ENCODE measurements at regions of chr12 and their contacts with region 1.

Region 1: GRCh38 chr12:63843721-63844390 is 644 bp upstream of the SRGAP1 start:
- DNase-seq: peak; percentile 96
- ATAC-seq: peak; percentile 81
- H3K4me3 ChIP-seq: peak overlapping the region; percentile 89
- H3K27ac ChIP-seq: peak overlapping the region; percentile 61
- H3K4me1 ChIP-seq: peaks cover 14% of the 10 kb centered on the region
- H3K27me3 ChIP-seq: no peaks in the 10 kb centered on the region
- CTCF ChIP-seq: peak; percentile 85

Region 2: GRCh38 chr12:63862214-63863107 is 18.6 kb after region 1 on chr12:
- CTCF ChIA-PET with region 1: interaction called, 3 read pairs
- POLR2A ChIA-PET with region 1: interaction called, 3 read pairs
- intact Hi-C with region 1: loop called (anchors 2 kb)
- DNase-seq: peak; percentile 96
- ATAC-seq: peak; percentile 87
- H3K4me3 ChIP-seq: peak overlapping the region; percentile 53
- H3K27ac ChIP-seq: peak overlapping the region; percentile 89
- H3K4me1 ChIP-seq: peaks cover 52% of the 10 kb centered on the region
- H3K27me3 ChIP-seq: no peaks in the 10 kb centered on the region
- CTCF ChIP-seq: no peak

Region 3: GRCh38 chr12:63978519-63978918 is 134.7 kb after region 1 on chr12:
- CTCF ChIA-PET with region 1: no interaction called
- POLR2A ChIA-PET with region 1: no interaction called
- intact Hi-C with region 1: loop called (anchors 5 kb)
- DNase-seq: peak; percentile 96
- ATAC-seq: peak; percentile 79
- H3K4me3 ChIP-seq: no peak overlapping the region
- H3K27ac ChIP-seq: peak overlapping the region; percentile 63
- H3K4me1 ChIP-seq: peaks cover 54% of the 10 kb centered on the region
- H3K27me3 ChIP-seq: no peaks in the 10 kb centered on the region
- CTCF ChIP-seq: no peak

Region 4: DNA sequence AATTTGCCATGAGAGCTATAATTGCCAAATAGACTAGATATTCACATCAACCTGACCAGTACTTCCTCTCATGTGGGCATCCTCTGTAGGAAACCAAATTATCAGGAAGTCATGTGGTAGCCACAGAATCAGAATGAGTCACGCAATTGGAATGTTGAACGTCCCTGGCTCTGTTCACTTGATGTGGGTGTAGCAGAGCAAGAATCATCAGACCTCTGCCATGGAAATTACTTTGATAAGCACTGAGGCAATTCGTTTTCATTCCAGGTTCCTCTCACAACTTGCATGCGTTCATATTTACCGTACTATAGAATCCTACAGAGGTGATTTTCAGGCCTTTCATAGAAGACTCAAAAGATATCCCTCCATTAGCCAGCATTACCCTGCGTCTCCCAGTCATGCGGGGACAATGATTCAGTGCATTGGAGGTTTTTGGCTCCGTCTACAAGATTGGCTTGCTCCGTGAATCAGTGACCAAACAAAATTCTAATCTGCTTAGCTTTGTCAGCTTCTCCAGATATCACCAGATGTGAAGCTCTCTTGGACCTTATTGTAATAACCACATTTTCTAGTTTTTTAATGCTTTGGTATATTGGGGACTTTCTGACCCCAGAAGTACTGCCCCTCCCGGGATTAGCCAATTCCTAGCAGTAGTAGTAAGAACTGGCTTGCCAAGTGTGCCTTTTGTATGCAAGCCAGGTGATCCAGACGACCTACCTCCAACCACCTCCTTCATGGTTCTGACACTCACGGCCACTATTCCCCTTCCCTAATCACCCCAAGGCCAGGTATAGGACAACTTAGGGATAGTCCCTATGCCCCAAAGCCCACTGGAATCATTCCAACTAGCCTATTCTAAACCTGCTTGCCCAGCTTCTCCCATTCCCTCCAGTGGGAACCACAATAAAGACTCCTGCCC is 244.8 kb after region 1 on chr12:
- CTCF ChIA-PET with region 1: interaction called, 3 read pairs
- POLR2A ChIA-PET with region 1: interaction called, 4 read pairs
- intact Hi-C with region 1: loop called (anchors 5 kb)
- DNase-seq: peak; percentile 98
- ATAC-seq: peak; percentile 96
- H3K4me3 ChIP-seq: peak overlapping the region; percentile 39
- H3K27ac ChIP-seq: peak overlapping the region; percentile 78
- H3K4me1 ChIP-seq: peaks cover 42% of the 10 kb centered on the region
- H3K27me3 ChIP-seq: no peaks in the 10 kb centered on the region
- CTCF ChIP-seq: no peak

Region 5: DNA sequence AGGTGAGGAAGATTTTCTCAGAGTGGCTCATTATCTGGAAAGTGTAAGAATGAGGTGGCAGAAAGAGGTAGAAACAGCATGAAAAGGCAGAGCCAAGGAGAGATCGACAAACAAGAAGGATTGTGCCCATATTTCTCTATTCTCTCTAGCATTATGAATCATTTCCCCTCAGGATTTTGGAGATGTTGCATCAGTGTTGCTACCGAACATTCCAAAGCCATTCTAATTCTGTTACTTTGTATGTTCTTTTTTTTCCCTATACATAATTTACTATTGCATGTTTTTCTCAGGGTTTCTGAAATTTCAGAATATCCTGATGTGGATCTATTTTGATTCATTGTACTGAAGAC is 316.8 kb after region 1 on chr12:
- CTCF ChIA-PET with region 1: no interaction called
- POLR2A ChIA-PET with region 1: no interaction called
- intact Hi-C with region 1: loop called (anchors 1 kb)
- DNase-seq: peak; percentile 73
- ATAC-seq: peak; percentile 86
- H3K4me3 ChIP-seq: peak overlapping the region; percentile 40; the same call in 1 of the 2 replicates
- H3K27ac ChIP-seq: peak overlapping the region; percentile 79
- H3K4me1 ChIP-seq: peaks cover 21% of the 10 kb centered on the region
- H3K27me3 ChIP-seq: no peaks in the 10 kb centered on the region
- CTCF ChIP-seq: no peak

Region 6: DNA sequence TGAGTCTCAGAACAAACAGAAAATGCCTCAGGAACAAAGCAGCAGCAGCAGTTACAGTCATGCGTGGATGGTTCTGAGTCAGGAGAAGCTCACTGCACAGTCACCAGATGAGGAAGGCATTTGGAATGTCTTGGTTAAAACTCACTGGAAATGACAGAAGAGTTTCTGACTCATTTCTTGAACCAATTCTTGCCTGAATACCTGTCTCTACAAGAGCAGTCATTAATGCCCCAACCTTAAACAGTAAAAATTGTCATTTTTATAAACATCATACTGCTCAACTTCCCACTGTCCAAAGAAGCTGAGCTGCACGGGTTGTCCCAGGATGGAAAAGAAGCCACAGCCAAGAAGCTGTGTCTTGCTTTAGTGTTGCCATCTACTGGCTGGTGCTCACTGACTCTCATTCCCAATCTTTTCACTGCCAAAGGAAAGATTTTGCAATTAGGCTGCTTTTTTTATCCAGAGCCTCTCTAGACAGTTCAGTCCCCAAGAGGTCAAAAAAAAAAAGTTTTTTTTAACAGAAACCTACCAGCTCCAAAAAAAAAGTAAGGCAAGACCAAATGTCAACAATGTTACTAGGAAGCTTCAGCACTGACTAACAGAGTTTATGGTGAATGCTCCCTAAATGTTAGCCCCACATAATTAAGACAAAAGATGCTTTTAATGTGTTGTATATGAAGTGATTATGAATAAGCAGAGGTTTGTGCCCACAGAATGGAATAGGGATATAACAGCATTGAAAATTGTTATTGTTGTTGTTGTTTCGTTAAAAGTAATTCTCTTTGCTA is 337.8 kb after region 1 on chr12:
- CTCF ChIA-PET with region 1: interaction called, 4 read pairs
- POLR2A ChIA-PET with region 1: interaction called, 4 read pairs
- intact Hi-C with region 1: loop called (anchors 1 kb)
- DNase-seq: peak; percentile 99
- ATAC-seq: peak; percentile 87
- H3K4me3 ChIP-seq: peak overlapping the region; percentile 44; the same call in 1 of the 2 replicates
- H3K27ac ChIP-seq: peak overlapping the region; percentile 99
- H3K4me1 ChIP-seq: peaks cover 60% of the 10 kb centered on the region
- H3K27me3 ChIP-seq: no peaks in the 10 kb centered on the region
- CTCF ChIP-seq: peak; percentile 77

Region 7: GRCh38 chr12:64256166-64256800 is 412.4 kb after region 1 on chr12:
- CTCF ChIA-PET with region 1: no interaction called
- POLR2A ChIA-PET with region 1: no interaction called
- intact Hi-C with region 1: loop called (anchors 1 kb)
- DNase-seq: peak; percentile 85
- ATAC-seq: peak; percentile 38
- H3K4me3 ChIP-seq: no peak overlapping the region
- H3K27ac ChIP-seq: no peak overlapping the region
- H3K4me1 ChIP-seq: no peaks in the 10 kb centered on the region
- H3K27me3 ChIP-seq: no peaks in the 10 kb centered on the region
- CTCF ChIP-seq: peak; percentile 89